AG04450 (cell line): ENCODE measurements at regions of chr12 and their contacts with region 1.

Region 1: GRCh38 chr12:124369055-124369900 is 74.4 kb downstream of the RFLNA start:
- DNase-seq: peak; percentile 80
- H3K4me3 ChIP-seq: no peak overlapping the region
- H3K27ac ChIP-seq: peak overlapping the region; percentile 93
- H3K27me3 ChIP-seq: no peaks in the 10 kb centered on the region
- CTCF ChIP-seq: peak; percentile 55

Region 2: DNA sequence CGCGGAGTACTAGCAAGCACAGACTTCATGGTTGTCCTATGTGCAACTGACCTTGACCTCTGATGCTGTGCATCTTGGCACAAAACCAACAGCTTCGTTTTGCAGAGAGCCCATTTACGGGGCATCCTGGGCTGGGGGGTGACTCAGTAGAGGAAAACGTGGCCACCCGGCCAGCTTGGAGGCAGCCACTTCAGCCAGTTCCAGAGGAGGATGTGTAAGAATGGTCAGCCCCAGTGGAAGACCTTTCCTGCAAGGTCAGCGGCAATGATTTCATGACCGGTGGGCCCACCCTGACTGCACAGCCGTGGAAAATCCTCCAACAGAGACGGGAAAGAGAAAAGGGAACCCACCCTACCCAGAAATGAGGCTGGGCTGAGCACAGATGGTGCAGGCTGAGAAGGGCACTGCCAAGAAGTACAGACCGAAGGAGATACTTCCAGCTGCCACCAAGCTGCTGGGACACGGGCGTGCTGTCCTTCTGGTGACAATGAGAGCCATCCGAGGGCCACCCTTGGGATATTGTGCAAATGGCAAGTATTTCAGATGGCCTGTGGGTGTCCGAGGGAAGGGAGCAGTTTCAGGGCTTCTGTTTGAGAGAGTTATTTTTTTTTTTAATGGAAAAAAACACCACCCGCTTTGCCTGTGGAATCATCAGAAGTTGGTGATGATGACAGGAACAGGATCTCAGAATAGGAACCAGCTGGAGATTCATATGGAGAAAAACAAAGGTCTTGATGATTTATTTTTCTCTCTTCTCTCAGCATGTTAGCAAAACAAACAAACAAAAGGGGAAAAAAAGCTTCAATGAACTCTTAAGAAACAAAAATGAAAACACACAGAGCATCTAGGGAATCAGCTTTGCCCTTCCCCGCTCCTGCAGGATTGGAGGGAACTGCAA is 194.6 kb before region 1 on chr12:
- CTCF ChIA-PET with region 1: no interaction called
- POLR2A ChIA-PET with region 1: no interaction called
- DNase-seq: no peak
- H3K4me3 ChIP-seq: no peak overlapping the region
- H3K27ac ChIP-seq: no peak overlapping the region
- H3K27me3 ChIP-seq: peaks cover 14% of the 10 kb centered on the region
- CTCF ChIP-seq: no peak

Region 3: GRCh38 chr12:124354400-124354799 is 14.9 kb before region 1 on chr12:
- CTCF ChIA-PET with region 1: no interaction called
- POLR2A ChIA-PET with region 1: no interaction called
- DNase-seq: no peak
- H3K4me3 ChIP-seq: no peak overlapping the region
- H3K27ac ChIP-seq: no peak overlapping the region
- H3K27me3 ChIP-seq: no peaks in the 10 kb centered on the region
- CTCF ChIP-seq: no peak

Region 4: DNA sequence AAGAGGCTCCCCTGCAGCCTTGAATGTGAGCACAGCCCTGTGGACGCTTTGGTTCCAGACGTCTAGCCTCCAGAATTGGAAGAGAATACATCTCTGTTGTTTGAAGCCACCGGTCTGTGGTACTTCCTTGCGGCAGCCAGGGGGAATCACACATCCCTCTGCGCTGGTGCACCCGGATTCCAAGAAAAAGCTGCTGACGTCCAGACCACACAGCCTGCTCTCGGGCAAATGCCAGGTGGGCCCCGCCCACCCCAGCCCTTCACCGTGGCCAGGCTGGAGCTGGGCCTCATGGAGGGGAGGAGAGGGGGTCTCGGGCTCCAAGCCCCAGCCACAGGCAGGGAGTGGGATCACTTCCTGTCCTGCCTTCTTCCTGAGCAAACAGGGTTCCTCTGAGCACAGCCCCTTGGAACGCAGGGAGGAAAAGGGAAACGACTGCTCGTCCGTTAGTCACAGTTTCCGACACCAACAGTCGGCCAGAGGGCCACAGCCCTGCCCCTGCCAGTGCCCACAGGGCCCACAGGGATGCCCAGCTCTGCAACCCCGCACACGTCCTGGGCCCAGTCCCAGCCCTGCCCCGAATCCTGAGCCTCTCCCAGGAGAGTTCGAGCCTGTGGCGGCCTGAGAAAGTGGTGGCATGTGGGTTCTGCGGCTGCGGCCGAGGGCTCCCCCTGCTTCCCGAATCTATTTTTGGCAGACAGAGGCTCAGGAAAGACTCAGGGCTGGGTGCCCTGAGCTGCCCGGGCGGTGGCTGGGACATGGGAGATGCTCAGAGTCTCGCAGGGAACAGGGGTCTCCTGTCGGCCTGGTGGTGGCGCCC is 10.9 kb after region 1 on chr12:
- CTCF ChIA-PET with region 1: interaction called, 10 read pairs
- POLR2A ChIA-PET with region 1: no interaction called
- DNase-seq: peak; percentile 58
- H3K4me3 ChIP-seq: no peak overlapping the region
- H3K27ac ChIP-seq: peak overlapping the region; percentile 95
- H3K27me3 ChIP-seq: no peaks in the 10 kb centered on the region
- CTCF ChIP-seq: peak; percentile 77